ENCODE measurements at regions of chr11 and their contacts with region 1.

Region 1: DNA sequence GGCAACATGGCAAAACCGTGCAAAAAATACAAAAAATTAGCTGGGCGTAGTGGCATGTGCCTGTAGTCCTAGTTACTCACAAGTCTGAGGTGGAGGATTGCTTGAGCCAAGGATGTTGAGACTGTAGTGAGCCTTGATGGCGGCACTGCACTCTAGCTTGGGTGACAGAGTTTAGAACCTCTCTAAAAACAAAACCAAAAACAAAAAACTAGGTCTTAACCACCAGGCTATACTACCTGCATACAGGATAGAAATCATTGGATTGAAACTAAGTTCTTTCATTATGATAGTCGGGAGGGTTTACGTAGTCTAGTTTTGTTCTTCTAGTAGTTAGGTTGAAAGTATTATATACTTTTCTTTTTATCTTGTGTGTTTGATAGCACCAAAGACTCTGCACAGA is 5.8 kb downstream of the RNF214 start:
- DNase-seq: no peak
- H3K4me3 ChIP-seq: no peak overlapping the region
- CTCF ChIP-seq: no peak

Region 2: GRCh38 chr11:117037279-117037974 is 200.8 kb before region 1 on chr11:
- CTCF ChIA-PET with region 1: no interaction called
- POLR2A ChIA-PET with region 1: no interaction called
- DNase-seq: no peak
- H3K4me3 ChIP-seq: no peak overlapping the region
- CTCF ChIP-seq: no peak

Region 3: GRCh38 chr11:117171404-117172061 is 66.7 kb before region 1 on chr11:
- CTCF ChIA-PET with region 1: no interaction called
- POLR2A ChIA-PET with region 1: no interaction called
- DNase-seq: no peak
- H3K4me3 ChIP-seq: no peak overlapping the region
- CTCF ChIP-seq: no peak

Region 4: GRCh38 chr11:117249571-117249970 is 11.3 kb after region 1 on chr11:
- CTCF ChIA-PET with region 1: interaction called, 10 read pairs
- POLR2A ChIA-PET with region 1: no interaction called
- DNase-seq: no peak
- H3K4me3 ChIP-seq: no peak overlapping the region
- CTCF ChIP-seq: no peak